Dendritic cell treated with granulocyte-macrophage colony-stimulating factor and Interleukin-4, amounts not matched to agents 40 ng/mL and 50 ng/mL, for 4 days (primary cell): ENCODE measurements at regions of chr15 and their contacts with region 1.

Region 1: GRCh38 chr15:80058851-80059785 is at the start of gene ZFAND6:
- H3K4me3 Mint-ChIP-seq: peak within 1 kb of the TSS; percentile 86
- H3K27ac Mint-ChIP-seq: peak within 1 kb of the TSS; percentile 91
- H3K4me1 Mint-ChIP-seq: peaks cover 22% of the 10 kb centered on the region
- H3K27me3 Mint-ChIP-seq: peaks cover 7% of the 10 kb centered on the region

Region 2: DNA sequence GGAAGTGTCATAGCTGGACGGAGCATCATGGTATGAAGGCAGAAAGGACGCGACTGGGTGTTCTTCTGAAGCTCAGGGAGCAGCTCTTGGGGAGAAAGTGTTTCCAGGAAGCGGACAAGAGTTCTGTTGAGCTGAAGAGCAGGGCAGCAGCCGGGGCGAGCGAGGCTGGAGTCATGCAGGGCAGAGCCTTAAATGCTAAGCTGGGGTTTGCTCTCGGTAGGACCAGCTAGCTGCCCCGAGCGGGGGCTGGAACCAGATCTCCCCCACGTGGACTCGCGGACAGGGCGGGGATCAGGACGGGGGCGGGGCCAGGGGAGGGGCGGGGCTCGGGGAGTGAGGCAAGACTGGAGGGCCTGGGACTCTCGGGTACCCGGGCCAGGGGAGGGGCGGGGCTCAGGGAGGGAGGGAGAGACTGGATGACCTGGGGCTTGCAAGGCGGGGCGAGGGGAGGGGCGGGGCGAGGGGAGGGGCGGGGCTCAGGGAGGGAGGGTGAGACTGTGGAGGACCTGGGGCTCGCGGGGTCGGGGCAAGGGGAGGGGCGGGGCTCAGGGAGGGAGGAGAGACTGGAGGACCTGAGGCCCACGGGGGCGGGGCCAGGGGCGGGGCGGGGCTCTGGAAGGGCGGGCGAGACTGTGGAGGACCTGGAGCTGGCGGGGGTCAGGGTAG is 93.2 kb after region 1 on chr15:
- intact Hi-C with region 1: loop called (anchors 2 kb)
- H3K4me3 Mint-ChIP-seq: peak overlapping the region; percentile 86
- H3K27ac Mint-ChIP-seq: peak overlapping the region; percentile 82
- H3K4me1 Mint-ChIP-seq: peaks cover 50% of the 10 kb centered on the region
- H3K27me3 Mint-ChIP-seq: peaks cover 4% of the 10 kb centered on the region